BJ (cell line): ENCODE measurements at regions of chr12 and their contacts with region 1.

Region 1: DNA sequence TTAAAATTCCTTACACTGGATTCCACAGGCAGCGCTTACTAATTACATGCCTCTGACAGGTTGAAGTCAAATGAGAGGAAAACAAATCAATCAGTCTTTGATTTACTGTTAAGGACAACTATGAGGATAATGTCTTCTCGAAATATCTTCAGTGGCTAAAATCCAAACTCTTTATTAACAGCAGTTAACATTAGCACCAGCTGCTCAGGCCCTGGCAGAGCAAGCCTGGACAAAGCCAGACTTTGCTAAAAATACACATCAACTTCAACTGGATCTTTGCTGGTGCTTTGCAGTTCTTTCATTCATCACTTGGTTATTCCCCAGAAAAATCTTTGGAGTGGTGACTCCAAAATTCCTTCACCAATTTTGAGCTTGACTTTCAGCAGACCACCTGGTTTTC is 98.7 kb downstream of the HECTD4 start:
- DNase-seq: no peak
- H3K4me3 ChIP-seq: no peak overlapping the region
- H3K27me3 ChIP-seq: no peaks in the 10 kb centered on the region
- CTCF ChIP-seq: no peak

Region 2: DNA sequence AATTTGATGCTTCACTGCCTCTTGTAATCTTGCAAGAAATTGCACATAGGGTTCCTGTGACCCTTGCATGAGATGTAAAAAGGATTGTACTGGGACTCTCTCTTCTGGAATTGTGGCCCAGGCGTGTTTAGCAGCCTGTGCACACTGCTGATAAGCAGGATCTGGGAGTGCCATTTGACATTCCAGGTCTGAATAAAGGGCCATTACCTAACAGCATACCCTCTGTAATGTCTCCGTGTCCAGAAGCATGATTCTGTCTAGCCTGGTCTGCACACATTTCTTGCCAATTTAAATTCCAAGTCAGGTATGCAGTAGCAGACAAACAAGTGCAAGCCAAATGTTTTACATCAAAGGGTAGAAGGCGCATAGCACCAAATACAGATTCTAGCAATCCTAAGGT is 459.7 kb before region 1 on chr12:
- CTCF ChIA-PET with region 1: no interaction called
- POLR2A ChIA-PET with region 1: no interaction called
- DNase-seq: no peak
- H3K4me3 ChIP-seq: no peak overlapping the region
- H3K27me3 ChIP-seq: peaks cover 9% of the 10 kb centered on the region
- CTCF ChIP-seq: no peak

Region 3: DNA sequence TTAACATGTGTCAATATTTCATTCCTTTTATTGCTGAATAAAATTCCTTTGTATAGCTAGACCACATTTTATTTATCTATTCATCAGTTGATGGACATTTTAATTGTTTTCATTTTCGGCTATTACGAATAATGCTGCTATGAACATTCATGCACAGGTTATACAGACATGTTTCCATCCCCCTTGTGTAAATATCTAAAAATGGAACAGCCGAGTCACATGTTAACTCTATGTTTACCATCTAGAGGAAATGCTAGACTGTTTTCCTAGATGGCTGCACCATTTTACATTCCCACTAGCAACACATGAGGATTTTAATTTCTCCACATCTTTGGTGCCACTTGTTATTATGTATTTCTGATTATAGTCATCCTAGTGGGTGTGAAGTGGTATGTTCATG is 49.5 kb after region 1 on chr12:
- CTCF ChIA-PET with region 1: no interaction called
- POLR2A ChIA-PET with region 1: interaction called, 12 read pairs
- DNase-seq: no peak
- H3K4me3 ChIP-seq: no peak overlapping the region
- H3K27me3 ChIP-seq: no peaks in the 10 kb centered on the region
- CTCF ChIP-seq: no peak

Region 4: GRCh38 chr12:112482733-112483132 is 199.2 kb after region 1 on chr12:
- CTCF ChIA-PET with region 1: no interaction called
- POLR2A ChIA-PET with region 1: no interaction called
- DNase-seq: no peak
- H3K4me3 ChIP-seq: no peak overlapping the region
- H3K27me3 ChIP-seq: no peaks in the 10 kb centered on the region
- CTCF ChIP-seq: no peak